ENCODE measurements at regions of chr20 and their contacts with region 1.

Region 1: GRCh38 chr20:15806105-15806504 is 767.1 kb downstream of the KIF16B start:
- DNase-seq: no peak
- ATAC-seq: no peak
- H3K4me3 ChIP-seq: no peak overlapping the region
- H3K4me3 Mint-ChIP-seq: no peak overlapping the region
- H3K27ac ChIP-seq: no peak overlapping the region
- H3K27ac Mint-ChIP-seq: no peak overlapping the region
- H3K4me1 ChIP-seq: peaks cover 17 to 25% of the 10 kb centered on the region in 2 donors
- H3K4me1 Mint-ChIP-seq: peaks cover 35% of the 10 kb centered on the region
- H3K27me3 ChIP-seq: no peaks in the 10 kb centered on the region
- H3K27me3 Mint-ChIP-seq: no peaks in the 10 kb centered on the region
- CTCF ChIP-seq: no peak

Region 2: GRCh38 chr20:14507711-14508110 is 1298.4 kb before region 1 on chr20:
- CTCF ChIA-PET with region 1: no interaction called
- POLR2A ChIA-PET with region 1: no interaction called
- intact Hi-C with region 1: loop called (anchors 5 kb)
- DNase-seq: no peak
- ATAC-seq: no peak
- H3K4me3 ChIP-seq: no peak overlapping the region
- H3K4me3 Mint-ChIP-seq: no peak overlapping the region
- H3K27ac ChIP-seq: no peak overlapping the region
- H3K27ac Mint-ChIP-seq: no peak overlapping the region
- H3K4me1 ChIP-seq: no peaks in the 10 kb centered on the region
- H3K4me1 Mint-ChIP-seq: no peaks in the 10 kb centered on the region
- H3K27me3 ChIP-seq: no peaks in the 10 kb centered on the region
- H3K27me3 Mint-ChIP-seq: no peaks in the 10 kb centered on the region
- CTCF ChIP-seq: no peak

Region 3: DNA sequence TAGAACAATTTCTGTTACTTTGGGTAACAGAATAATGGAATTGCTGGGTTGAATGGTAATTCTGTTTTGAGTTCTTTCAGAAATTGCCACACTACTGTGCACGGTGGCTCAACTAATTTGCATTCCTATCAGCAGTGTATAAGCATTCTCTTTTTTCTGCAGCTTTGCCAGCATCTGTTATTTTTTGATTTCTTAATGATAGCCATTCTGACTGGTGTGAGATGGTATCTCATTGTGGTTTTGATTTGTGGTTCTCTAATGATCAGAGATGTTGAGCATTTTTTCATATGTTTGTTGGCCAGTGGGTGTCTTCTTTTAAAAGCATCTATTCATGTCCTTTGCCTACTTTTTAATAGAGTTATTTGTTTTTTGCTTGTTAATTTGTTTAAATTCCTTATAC is 79.7 kb before region 1 on chr20:
- CTCF ChIA-PET with region 1: no interaction called
- POLR2A ChIA-PET with region 1: no interaction called
- intact Hi-C with region 1: no loop called
- DNase-seq: no peak
- ATAC-seq: no peak
- H3K4me3 ChIP-seq: no peak overlapping the region
- H3K4me3 Mint-ChIP-seq: no peak overlapping the region
- H3K27ac ChIP-seq: no peak overlapping the region
- H3K27ac Mint-ChIP-seq: no peak overlapping the region
- H3K4me1 ChIP-seq: no peaks in the 10 kb centered on the region
- H3K4me1 Mint-ChIP-seq: no peaks in the 10 kb centered on the region
- H3K27me3 ChIP-seq: no peaks in the 10 kb centered on the region
- H3K27me3 Mint-ChIP-seq: no peaks in the 10 kb centered on the region
- CTCF ChIP-seq: no peak

Region 4: DNA sequence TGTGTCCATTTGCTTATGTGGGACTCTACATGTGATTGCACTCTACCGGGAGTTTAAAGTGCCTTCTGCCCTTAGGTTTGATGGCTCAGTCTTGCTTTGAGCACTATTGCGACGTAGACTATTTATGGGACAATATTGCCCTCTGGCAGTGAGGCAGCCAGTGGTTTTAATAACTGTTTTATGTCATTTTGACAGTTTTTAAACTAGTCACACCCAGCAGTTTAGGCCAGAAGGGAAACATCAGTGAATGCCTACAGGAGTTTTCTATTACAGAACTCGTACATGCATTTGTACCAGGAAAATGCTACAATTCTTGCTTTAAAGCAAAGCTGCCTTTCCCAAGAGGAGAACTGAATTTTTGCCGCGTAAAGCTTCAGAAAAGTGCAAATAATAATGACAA is 46.5 kb before region 1 on chr20:
- CTCF ChIA-PET with region 1: no interaction called
- POLR2A ChIA-PET with region 1: no interaction called
- intact Hi-C with region 1: loop called (anchors 5 kb)
- DNase-seq: no peak
- ATAC-seq: no peak
- H3K4me3 ChIP-seq: no peak overlapping the region
- H3K4me3 Mint-ChIP-seq: no peak overlapping the region
- H3K27ac ChIP-seq: no peak overlapping the region
- H3K27ac Mint-ChIP-seq: no peak overlapping the region
- H3K4me1 ChIP-seq: peaks cover 16 to 18% of the 10 kb centered on the region in 2 donors
- H3K4me1 Mint-ChIP-seq: peaks cover 23% of the 10 kb centered on the region
- H3K27me3 ChIP-seq: no peaks in the 10 kb centered on the region
- H3K27me3 Mint-ChIP-seq: no peaks in the 10 kb centered on the region
- CTCF ChIP-seq: no peak

Region 5: DNA sequence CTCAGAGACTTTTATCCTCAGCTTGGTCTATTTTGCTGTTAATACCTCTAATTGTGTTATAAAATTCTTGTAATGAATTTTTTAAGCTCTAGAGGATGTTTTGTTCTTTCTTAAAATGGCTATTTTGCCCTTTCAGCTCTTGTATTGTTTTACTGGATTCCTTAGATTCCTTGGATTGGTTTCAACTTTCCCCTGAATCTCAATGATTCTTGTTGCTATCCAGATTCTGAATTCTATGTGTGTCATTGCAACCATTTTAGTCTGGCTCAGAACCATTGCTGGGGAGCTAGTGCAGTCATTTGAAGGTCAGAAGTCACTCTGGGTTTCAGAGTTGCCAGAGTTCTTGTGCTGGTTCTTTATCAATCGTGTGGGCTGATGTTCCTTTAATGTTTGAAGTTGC is 979.1 kb after region 1 on chr20:
- CTCF ChIA-PET with region 1: no interaction called
- POLR2A ChIA-PET with region 1: no interaction called
- intact Hi-C with region 1: no loop called
- DNase-seq: no peak
- ATAC-seq: no peak
- H3K4me3 ChIP-seq: no peak overlapping the region
- H3K4me3 Mint-ChIP-seq: no peak overlapping the region
- H3K27ac ChIP-seq: no peak overlapping the region
- H3K27ac Mint-ChIP-seq: no peak overlapping the region
- H3K4me1 ChIP-seq: no peaks in the 10 kb centered on the region
- H3K4me1 Mint-ChIP-seq: no peaks in the 10 kb centered on the region
- H3K27me3 ChIP-seq: no peaks in the 10 kb centered on the region
- H3K27me3 Mint-ChIP-seq: peaks cover 9% of the 10 kb centered on the region
- CTCF ChIP-seq: no peak

Measured in B cell (primary cell).